Right cardiac atrium (tissue), 5 donors: ENCODE measurements at regions of chr16 and their contacts with region 1.

Region 1: DNA sequence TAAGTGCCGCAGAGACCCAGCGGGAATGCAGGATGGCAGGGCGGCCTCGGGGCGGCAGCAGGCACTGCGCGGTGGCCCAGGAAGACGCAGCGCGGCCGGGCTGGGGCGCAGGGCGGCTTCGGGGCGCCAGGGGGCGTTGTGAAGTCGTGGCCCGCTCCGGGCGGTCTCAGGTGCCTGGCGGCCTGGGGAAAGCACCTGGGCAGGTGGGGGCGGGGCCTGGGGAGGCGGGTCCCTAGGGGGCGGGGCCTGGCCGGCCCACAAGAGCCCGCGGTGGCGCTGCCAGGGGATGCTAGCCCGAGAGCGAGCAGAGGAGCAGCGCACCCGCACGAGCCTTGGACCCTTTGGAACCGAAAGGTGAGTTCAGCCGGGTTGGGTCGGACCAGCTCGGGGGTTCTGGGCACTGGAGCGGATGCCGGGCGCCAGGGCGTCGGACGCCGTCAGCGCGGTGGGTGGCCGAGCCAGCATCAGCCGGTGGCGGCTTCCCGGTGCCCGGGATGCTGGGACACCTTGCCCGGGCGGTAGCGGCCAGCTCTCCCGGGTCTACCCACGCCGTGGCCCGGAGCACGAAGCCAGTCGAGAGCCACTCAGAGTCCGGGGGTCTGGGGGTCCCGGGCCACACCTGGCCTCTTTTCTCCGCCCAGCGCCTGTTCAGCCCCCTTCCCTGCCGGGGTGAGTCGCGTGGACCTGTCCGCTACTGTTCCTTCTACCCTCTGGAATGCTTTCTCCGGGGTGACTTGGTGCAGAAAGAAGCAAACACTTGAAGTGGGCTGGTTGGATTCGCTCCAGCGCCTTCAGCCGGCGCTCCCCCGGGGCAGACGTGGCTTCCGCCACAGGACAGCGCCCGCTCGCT is at the start of gene SCNN1G:
- DNase-seq: peak; percentile 66 to 89 (median 88)
- ATAC-seq: peak; percentile 94 to 96
- H3K4me3 ChIP-seq: peak within 1 kb of the TSS; percentile 33
- H3K27ac ChIP-seq: no peak within 1 kb of the TSS
- H3K4me1 ChIP-seq: peaks cover 7% of the 10 kb centered on the region
- H3K27me3 ChIP-seq: no peaks in the 10 kb centered on the region
- total RNA-seq, gene SCNN1G: not detected

Region 2: GRCh38 chr16:23172583-23172982 is 10.1 kb before region 1 on chr16:
- intact Hi-C with region 1: no loop called
- DNase-seq: no peak
- ATAC-seq: no peak
- H3K4me3 ChIP-seq: no peak overlapping the region
- H3K27ac ChIP-seq: no peak overlapping the region
- H3K4me1 ChIP-seq: no peaks in the 10 kb centered on the region
- H3K27me3 ChIP-seq: no peaks in the 10 kb centered on the region

Region 3: GRCh38 chr16:23435500-23435899 is 252.8 kb after region 1 on chr16:
- intact Hi-C with region 1: loop called (anchors 2 to 5 kb)
- DNase-seq: peak; percentile 45 to 77 (median 76)
- ATAC-seq: peak; percentile 68 to 78
- H3K4me3 ChIP-seq: no peak overlapping the region
- H3K27ac ChIP-seq: no peak overlapping the region
- H3K4me1 ChIP-seq: no peaks in the 10 kb centered on the region
- H3K27me3 ChIP-seq: no peaks in the 10 kb centered on the region